Activated CD4-positive, alpha-beta memory T cell treated with anti-CD3 and anti-CD28 coated beads for 36 hours (primary cell): ENCODE measurements at regions of chr19 and their contacts with region 1.

Region 1: DNA sequence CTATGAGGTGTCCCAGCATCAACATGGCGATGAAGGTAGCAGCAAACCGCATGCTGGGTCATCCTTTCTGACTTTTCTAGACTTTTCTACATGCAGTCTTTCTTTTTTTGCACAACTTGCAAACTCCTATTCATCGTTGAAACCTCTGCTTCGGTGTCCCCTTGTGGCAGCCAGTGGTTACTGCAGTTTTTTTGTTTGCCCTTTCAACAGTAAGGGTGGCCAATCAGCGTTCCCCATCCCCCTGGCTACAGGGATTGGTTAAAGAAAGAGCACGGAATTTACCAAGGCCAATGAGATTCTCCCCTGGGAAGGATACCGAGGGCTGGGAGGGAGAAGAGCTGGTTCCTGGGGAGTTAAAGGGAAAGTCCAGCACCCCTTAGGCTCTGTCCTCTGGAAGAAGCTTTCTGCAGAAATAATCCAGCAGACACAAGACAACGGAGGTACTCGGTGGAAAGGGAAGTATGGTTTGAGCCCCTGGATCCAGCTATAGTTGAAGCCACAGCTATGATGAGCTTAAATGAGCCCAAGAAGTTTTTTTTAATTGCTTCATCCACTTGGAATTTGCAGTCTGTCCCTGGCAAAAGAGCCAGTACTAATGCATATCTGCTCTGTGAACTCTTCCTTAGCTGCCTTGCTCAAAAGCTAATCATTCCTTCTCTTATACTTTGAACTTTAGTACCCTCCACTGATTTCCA is 5.6 kb upstream of the LSM4 start:
- DNase-seq: peak; percentile 94
- H3K4me3 Mint-ChIP-seq: peak overlapping the region; percentile 68
- H3K27ac Mint-ChIP-seq: peak overlapping the region; percentile 56
- H3K4me1 Mint-ChIP-seq: peaks cover 17% of the 10 kb centered on the region
- H3K27me3 Mint-ChIP-seq: no peaks in the 10 kb centered on the region

Region 2: GRCh38 chr19:18274781-18275356 is 53.6 kb before region 1 on chr19:
- CTCF ChIA-PET with region 1: interaction called, 321 read pairs
- POLR2A ChIA-PET with region 1: interaction called, 257 read pairs
- intact Hi-C with region 1: loop called (anchors 1 kb)
- DNase-seq: no peak
- H3K4me3 Mint-ChIP-seq: no peak overlapping the region
- H3K27ac Mint-ChIP-seq: peak overlapping the region; percentile 23
- H3K4me1 Mint-ChIP-seq: peaks cover 34% of the 10 kb centered on the region
- H3K27me3 Mint-ChIP-seq: no peaks in the 10 kb centered on the region

Region 3: GRCh38 chr19:18340190-18340989 is 11.9 kb after region 1 on chr19 and contains the start of gene PGPEP1:
- CTCF ChIA-PET with region 1: interaction called, 23 read pairs
- POLR2A ChIA-PET with region 1: no interaction called
- intact Hi-C with region 1: no loop called
- DNase-seq: peak; percentile 76
- H3K4me3 Mint-ChIP-seq: peak within 1 kb of the TSS; percentile 79
- H3K27ac Mint-ChIP-seq: peak within 1 kb of the TSS; percentile 87
- H3K4me1 Mint-ChIP-seq: peaks cover 19% of the 10 kb centered on the region
- H3K27me3 Mint-ChIP-seq: no peaks in the 10 kb centered on the region
- total RNA-seq, gene PGPEP1: 29.0 to 30.8 TPM

Region 4: DNA sequence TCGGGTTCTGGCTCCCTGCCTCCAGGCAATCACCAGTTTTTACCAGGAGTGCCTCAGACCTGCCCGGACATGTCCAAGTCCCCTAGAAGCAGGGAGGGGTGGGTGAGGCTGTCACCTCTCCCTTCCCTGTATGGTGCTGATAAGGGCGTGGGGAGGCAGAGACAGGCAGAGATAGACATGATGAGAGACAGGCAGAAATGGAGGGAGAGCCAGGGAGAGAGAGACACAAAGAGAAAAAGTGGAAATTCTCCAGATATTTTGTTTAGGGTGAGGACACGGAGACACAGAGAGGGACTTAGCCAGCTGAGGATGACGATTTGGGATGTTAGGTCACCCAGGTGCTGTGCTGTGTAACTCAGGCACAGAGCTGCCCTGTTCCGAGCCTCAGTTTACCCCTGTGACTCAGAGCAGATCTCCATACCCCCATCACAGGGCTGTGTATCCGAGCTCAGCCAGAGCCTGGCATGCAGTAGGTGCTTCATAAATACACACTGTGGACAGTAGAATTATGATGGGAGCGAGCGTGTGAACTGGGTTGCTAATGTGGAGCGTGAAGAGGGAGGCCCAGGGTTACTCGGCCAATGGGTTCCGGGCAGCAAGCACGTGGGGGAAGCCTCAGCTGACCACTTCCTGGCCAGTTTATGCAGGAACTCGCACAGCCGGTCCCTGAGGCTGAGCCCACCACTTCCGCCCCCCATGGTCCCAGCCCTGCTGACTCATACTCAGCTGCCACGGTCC is 45.6 kb after region 1 on chr19:
- CTCF ChIA-PET with region 1: no interaction called
- POLR2A ChIA-PET with region 1: no interaction called
- intact Hi-C with region 1: no loop called
- DNase-seq: peak; percentile 86
- H3K4me3 Mint-ChIP-seq: peak overlapping the region; percentile 6
- H3K27ac Mint-ChIP-seq: peak overlapping the region; percentile 9
- H3K4me1 Mint-ChIP-seq: peaks cover 13% of the 10 kb centered on the region
- H3K27me3 Mint-ChIP-seq: peaks cover 2% of the 10 kb centered on the region

Region 5: DNA sequence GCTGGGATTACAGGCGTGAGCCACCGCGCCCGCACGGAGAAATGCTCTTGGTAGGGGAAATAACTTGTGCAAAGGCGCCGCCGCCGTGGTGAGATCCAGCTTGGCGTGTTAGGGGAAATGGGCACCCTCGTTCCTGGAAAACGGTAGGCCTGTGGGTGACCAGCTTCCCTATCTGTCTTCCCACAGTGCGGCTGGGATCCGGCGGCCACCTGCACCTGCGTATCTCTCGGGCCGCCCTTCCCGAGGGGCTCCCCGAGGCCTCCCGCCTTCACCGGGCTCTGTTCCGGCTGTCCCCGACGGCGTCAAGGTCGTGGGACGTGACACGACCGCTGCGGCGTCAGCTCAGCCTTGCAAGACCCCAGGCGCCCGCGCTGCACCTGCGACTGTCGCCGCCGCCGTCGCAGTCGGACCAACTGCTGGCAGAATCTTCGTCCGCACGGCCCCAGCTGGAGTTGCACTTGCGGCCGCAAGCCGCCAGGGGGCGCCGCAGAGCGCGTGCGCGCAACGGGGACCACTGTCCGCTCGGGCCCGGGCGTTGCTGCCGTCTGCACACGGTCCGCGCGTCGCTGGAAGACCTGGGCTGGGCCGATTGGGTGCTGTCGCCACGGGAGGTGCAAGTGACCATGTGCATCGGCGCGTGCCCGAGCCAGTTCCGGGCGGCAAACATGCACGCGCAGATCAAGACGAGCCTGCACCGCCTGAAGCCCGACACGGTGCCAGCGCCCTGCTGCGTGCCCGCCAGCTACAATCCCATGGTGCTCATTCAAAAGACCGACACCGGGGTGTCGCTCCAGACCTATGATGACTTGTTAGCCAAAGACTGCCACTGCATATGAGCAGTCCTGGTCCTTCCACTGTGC is 59.8 kb after region 1 on chr19:
- CTCF ChIA-PET with region 1: interaction called, 24 read pairs
- POLR2A ChIA-PET with region 1: no interaction called
- intact Hi-C with region 1: no loop called
- DNase-seq: peak; percentile 88
- H3K4me3 Mint-ChIP-seq: peak overlapping the region; percentile 64
- H3K27ac Mint-ChIP-seq: no peak overlapping the region
- H3K4me1 Mint-ChIP-seq: peaks cover 4% of the 10 kb centered on the region
- H3K27me3 Mint-ChIP-seq: peaks cover 31% of the 10 kb centered on the region

Region 6: GRCh38 chr19:18408053-18408476 is 79.6 kb after region 1 on chr19:
- CTCF ChIA-PET with region 1: interaction called, 21 read pairs
- POLR2A ChIA-PET with region 1: no interaction called
- intact Hi-C with region 1: loop called (anchors 1 kb)
- DNase-seq: peak; percentile 46
- H3K4me3 Mint-ChIP-seq: no peak overlapping the region
- H3K27ac Mint-ChIP-seq: no peak overlapping the region
- H3K4me1 Mint-ChIP-seq: peaks cover 5% of the 10 kb centered on the region
- H3K27me3 Mint-ChIP-seq: peaks cover 8% of the 10 kb centered on the region